ENCODE measurements at regions of chr22 and their contacts with region 1.

Region 1: GRCh38 chr22:40430991-40431390 is 60.6 kb downstream of the SGSM3 start:
- DNase-seq: no peak
- ATAC-seq: no peak
- H3K4me3 ChIP-seq: no peak overlapping the region
- H3K27ac ChIP-seq: no peak overlapping the region
- H3K4me1 ChIP-seq: peaks cover 8% of the 10 kb centered on the region
- H3K27me3 ChIP-seq: no peaks in the 10 kb centered on the region
- CTCF ChIP-seq: no peak
- POLR2A ChIP-seq: no peak
- RAD21 ChIP-seq: no peak

Region 2: DNA sequence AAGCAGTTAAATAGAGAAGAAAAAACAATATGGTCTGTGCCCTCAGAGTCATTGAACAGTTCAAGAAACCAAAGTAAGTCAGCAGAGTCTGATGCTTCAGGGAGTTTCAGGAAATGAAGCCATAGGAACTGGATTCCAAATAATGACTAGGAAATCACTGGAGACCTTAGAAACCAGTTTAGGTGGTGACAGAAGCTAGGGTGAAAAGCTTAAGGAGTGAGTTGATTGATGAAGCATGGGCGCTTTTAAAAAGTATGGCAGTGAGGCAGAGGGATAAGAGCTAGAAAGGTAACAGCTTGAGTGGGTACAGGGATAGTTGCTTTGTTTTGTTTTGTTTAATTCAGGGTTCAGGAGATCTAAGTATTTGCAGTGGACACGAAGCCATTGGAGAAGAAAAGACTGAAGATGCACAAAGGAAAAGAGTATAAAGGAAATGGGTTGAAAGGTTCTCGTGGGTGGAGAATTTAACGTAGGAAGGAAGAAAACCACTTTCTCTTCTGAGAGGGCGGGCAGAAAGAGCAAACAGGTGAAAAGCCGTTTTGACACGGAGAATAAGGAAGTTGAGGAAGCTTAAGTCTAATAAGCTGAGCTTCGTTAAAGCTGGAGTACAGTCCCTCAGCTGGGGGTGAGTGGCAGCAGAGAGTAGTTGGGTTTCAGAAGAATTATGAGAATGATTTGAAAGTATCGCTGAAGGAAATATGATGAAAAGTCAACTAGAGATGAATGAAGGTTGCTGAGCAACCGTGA is 45.8 kb before region 1 on chr22:
- CTCF ChIA-PET with region 1: no interaction called
- POLR2A ChIA-PET with region 1: no interaction called
- dilution Hi-C with region 1: no loop called
- in situ Hi-C with region 1: no loop called
- intact Hi-C with region 1: no loop called
- DNase-seq: no peak
- ATAC-seq: no peak
- H3K4me3 ChIP-seq: no peak overlapping the region
- H3K27ac ChIP-seq: no peak overlapping the region
- H3K4me1 ChIP-seq: no peaks in the 10 kb centered on the region; the same call in 1 of the 2 replicates
- H3K27me3 ChIP-seq: no peaks in the 10 kb centered on the region
- CTCF ChIP-seq: no peak
- POLR2A ChIP-seq: no peak
- RAD21 ChIP-seq: no peak

Region 3: DNA sequence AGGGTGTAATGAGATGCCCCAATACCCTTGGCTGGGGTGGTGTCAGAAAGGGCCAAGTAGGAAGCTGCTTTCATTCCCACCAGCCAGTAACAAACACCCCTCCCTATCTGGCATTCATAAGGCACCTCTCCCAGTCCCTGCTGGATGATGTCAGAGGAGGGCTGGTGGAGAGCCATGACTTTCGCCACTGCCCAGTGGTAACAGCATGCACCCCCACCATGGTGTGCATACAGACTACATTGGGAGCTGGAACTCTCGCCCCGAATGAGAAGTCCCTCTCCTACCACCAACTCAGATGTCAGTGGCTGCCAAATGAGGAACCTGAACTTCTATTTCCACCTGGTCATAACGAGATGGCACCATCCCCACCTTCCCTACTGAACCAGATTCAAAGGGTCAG is 12.7 kb after region 1 on chr22:
- CTCF ChIA-PET with region 1: no interaction called
- POLR2A ChIA-PET with region 1: no interaction called
- dilution Hi-C with region 1: no loop called
- in situ Hi-C with region 1: no loop called
- intact Hi-C with region 1: loop called (anchors 1 kb)
- DNase-seq: no peak
- ATAC-seq: no peak
- H3K4me3 ChIP-seq: no peak overlapping the region
- H3K27ac ChIP-seq: no peak overlapping the region
- H3K4me1 ChIP-seq: peaks cover 9% of the 10 kb centered on the region; the same call in 1 of the 2 replicates
- H3K27me3 ChIP-seq: no peaks in the 10 kb centered on the region
- CTCF ChIP-seq: no peak
- POLR2A ChIP-seq: no peak
- RAD21 ChIP-seq: no peak

Region 4: GRCh38 chr22:40560551-40560950 is 129.6 kb after region 1 on chr22:
- CTCF ChIA-PET with region 1: no interaction called
- POLR2A ChIA-PET with region 1: no interaction called
- dilution Hi-C with region 1: no loop called
- in situ Hi-C with region 1: no loop called
- intact Hi-C with region 1: no loop called
- DNase-seq: peak; percentile 65
- ATAC-seq: peak; percentile 78
- H3K4me3 ChIP-seq: no peak overlapping the region
- H3K27ac ChIP-seq: no peak overlapping the region
- H3K4me1 ChIP-seq: peaks cover 2% of the 10 kb centered on the region; the same call in 1 of the 2 replicates
- H3K27me3 ChIP-seq: no peaks in the 10 kb centered on the region
- CTCF ChIP-seq: no peak
- POLR2A ChIP-seq: no peak
- RAD21 ChIP-seq: no peak